ENCODE measurements at regions of chr17 and their contacts with region 1.

Region 1: GRCh38 chr17:79393358-79394202 is 217.3 kb downstream of the RBFOX3 start:
- DNase-seq: peak; percentile 82 to 95
- ATAC-seq: peak; percentile 74
- H3K4me3 ChIP-seq: no peak overlapping the region
- H3K27ac ChIP-seq: no peak overlapping the region
- H3K4me1 ChIP-seq: no peaks in the 10 kb centered on the region
- H3K27me3 ChIP-seq: no peaks in the 10 kb centered on the region

Region 2: DNA sequence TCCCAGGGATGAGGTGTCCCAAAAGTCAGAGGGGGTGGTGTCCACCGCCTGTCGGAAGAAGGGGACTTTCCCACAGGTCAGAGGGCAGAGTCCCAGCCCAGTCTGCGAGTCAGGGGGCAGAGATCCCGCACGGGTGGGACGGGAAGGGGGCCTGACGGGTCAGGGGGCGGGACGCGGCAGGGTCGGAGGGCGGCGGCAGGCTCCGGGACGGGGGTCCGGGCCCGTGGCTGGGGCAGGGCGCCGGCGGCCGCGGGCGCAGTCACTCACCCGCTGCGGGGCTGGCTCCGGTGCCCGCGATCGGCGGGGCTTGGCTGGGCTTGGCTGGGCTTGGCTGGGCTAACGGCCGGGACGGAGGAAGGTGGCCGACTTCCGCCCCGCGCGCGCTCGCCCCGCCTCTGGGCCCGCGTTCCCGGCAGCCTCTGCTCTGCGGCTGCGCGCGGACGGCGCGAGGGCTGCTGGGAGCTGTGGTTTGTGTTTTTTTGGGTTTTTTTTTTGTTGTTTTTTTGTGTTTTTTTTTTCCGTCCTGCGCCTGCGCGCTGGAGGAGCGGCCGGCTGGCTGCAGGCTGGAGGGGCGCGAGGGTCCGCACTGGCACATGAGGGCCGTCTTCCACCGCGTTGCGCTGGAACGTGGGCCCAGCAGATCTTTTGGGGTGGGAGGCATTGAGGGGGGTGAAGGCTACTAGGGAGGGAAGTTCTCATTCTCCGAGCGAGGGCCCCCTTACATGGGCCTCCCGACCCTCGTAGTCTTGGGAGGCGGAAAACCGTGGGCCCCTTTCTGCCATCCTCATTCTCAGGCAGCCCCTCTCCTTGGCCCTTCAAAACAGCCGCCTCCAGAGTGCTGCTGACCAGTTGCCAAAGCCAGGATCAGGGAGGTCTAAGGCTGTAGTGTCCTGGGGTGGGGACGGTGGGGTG is 383.9 kb before region 1 on chr17 and contains the start of gene CANT1:
- intact Hi-C with region 1: loop called (anchors 10 kb)
- DNase-seq: peak; percentile 91 to 95
- ATAC-seq: peak; percentile 96
- H3K4me3 ChIP-seq: peak within 1 kb of the TSS; percentile 76 to 98
- H3K27ac ChIP-seq: peak within 1 kb of the TSS in 1 of 2 donors; percentile 50
- H3K4me1 ChIP-seq: peaks cover 0 to 4% of the 10 kb centered on the region in 2 donors
- H3K27me3 ChIP-seq: no peaks in the 10 kb centered on the region
- total RNA-seq, gene CANT1: 37.5 to 45.5 TPM

Region 3: DNA sequence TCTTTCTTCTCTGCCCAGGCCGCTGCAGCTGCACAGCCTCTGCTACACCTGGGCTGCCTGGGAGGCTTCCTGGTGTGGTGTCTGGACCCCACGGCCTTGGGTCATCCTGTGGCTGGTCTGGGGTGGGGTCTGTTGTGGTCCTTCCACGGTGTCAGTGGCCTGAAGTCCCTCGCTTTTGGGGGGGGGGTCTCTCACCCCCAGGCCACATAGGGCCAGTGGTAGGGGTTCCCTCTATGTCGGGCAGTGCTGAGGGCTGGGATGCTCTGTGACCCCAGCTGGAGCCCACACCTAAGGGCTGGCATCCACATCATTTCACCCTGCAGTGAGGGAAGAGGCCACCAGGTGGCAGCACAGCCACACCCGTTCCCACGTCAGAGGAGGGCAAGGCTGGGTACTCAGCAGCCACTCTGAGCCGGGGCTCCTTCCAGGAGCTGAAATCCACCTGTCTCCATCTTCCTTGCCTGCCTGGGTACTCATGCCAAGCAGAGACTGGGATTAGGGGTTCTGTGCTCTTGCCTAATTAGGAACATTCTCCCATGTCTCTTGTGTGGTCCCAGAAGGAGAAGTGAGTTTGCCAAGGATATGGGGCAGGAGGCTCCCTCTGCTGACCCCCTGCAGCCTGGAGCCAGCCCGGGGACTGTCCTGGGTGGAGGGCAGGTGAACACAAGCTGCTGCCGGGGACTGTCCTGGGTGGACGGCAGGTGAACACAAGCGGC is 306.0 kb before region 1 on chr17:
- intact Hi-C with region 1: loop called (anchors 2 kb)
- DNase-seq: peak; percentile 69 to 93
- ATAC-seq: peak; percentile 82
- H3K4me3 ChIP-seq: no peak overlapping the region
- H3K27ac ChIP-seq: no peak overlapping the region
- H3K4me1 ChIP-seq: no peaks in the 10 kb centered on the region
- H3K27me3 ChIP-seq: no peaks in the 10 kb centered on the region

Region 4: DNA sequence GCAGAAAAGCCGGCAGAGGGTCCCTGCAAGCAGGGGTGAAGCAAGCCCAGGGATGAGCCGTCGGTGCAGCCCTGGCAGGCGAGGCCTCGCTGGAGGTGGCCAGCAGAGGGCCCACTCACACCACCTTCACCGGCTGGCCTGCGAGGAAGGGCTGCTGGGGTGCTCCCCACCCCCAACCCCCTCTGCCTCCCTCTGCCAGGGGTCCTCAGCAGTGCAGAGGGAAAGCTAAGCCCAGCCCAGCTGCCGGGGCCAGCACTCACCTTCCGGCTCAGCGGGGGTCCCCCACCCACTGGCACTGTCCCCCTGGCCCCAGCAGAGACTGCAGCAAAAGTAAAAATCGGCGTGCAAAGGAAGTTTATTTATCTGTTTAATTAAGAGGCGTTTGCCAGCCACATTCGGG is 205.5 kb before region 1 on chr17:
- intact Hi-C with region 1: loop called (anchors 5 kb)
- DNase-seq: no peak
- ATAC-seq: no peak
- H3K4me3 ChIP-seq: no peak overlapping the region
- H3K27ac ChIP-seq: no peak overlapping the region
- H3K4me1 ChIP-seq: no peaks in the 10 kb centered on the region
- H3K27me3 ChIP-seq: no peaks in the 10 kb centered on the region

Measured in aorta (tissue), 5 donors.